IMR-90 (cell line): ENCODE measurements at regions of chr10 and their contacts with region 1.

Region 1: DNA sequence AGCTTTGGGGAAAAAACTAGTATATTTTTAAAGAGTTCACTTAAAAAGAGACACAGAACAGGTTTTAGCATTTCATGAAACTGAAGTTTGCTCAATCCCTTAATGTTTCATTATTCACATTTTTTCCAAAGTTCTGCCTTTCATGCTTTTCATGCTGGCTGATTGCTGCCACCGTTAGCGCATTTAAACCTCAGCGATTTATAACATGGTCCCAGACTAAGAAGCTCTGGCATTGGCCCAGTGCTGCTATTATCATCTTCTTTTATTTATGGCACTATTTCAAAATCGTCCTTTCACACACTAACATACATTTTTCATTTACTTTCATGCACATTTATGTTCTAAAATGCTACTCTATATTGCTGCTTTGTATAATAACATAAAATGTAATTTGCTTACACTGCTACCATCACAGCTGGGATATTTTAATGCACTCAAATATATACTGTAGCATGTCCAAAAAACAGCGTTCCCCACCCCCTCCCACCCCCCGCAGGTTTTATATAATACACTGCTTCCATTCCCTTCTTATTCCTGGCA is 141.9 kb downstream of the MPP7 start:
- DNase-seq: no peak
- ATAC-seq: no peak
- H3K4me3 ChIP-seq: no peak overlapping the region
- H3K27ac ChIP-seq: no peak overlapping the region
- H3K4me1 ChIP-seq: no peaks in the 10 kb centered on the region
- H3K27me3 ChIP-seq: no peaks in the 10 kb centered on the region
- CTCF ChIP-seq: no peak
- POLR2A ChIP-seq: no peak
- RAD21 ChIP-seq: no peak

Region 2: GRCh38 chr10:27995311-27995710 is 165.6 kb before region 1 on chr10:
- CTCF ChIA-PET with region 1: no interaction called
- POLR2A ChIA-PET with region 1: no interaction called
- dilution Hi-C with region 1: no loop called
- in situ Hi-C with region 1: no loop called
- intact Hi-C with region 1: no loop called
- DNase-seq: no peak
- ATAC-seq: no peak; the same call in 1 of the 2 replicates
- H3K4me3 ChIP-seq: no peak overlapping the region
- H3K27ac ChIP-seq: no peak overlapping the region
- H3K4me1 ChIP-seq: peaks cover 1% of the 10 kb centered on the region; the same call in 1 of the 2 replicates
- H3K27me3 ChIP-seq: no peaks in the 10 kb centered on the region
- CTCF ChIP-seq: no peak
- POLR2A ChIP-seq: no peak
- RAD21 ChIP-seq: no peak

Region 3: GRCh38 chr10:28090506-28090905 is 70.4 kb before region 1 on chr10:
- CTCF ChIA-PET with region 1: interaction called, 11 read pairs
- POLR2A ChIA-PET with region 1: no interaction called
- dilution Hi-C with region 1: no loop called
- in situ Hi-C with region 1: no loop called
- intact Hi-C with region 1: no loop called
- DNase-seq: no peak
- ATAC-seq: no peak
- H3K4me3 ChIP-seq: no peak overlapping the region
- H3K27ac ChIP-seq: no peak overlapping the region; the same call in 1 of the 2 replicates
- H3K4me1 ChIP-seq: peaks cover 8% of the 10 kb centered on the region
- H3K27me3 ChIP-seq: no peaks in the 10 kb centered on the region
- CTCF ChIP-seq: no peak
- POLR2A ChIP-seq: no peak
- RAD21 ChIP-seq: no peak